CD4-positive, alpha-beta memory T cell (primary cell): ENCODE measurements at regions of chr20 and their contacts with region 1.

Region 1: GRCh38 chr20:53611449-53611894 is 17.8 kb upstream of the ZNF217 start:
- DNase-seq: no peak
- H3K4me3 ChIP-seq: no peak overlapping the region
- H3K4me3 Mint-ChIP-seq: no peak overlapping the region
- H3K27ac ChIP-seq: no peak overlapping the region
- H3K27ac Mint-ChIP-seq: peak overlapping the region in 2 of 7 donors; percentile 13 to 73
- H3K4me1 ChIP-seq: peaks cover 33% of the 10 kb centered on the region
- H3K4me1 Mint-ChIP-seq: peaks cover 13 to 28% (median 22%) of the 10 kb centered on the region in 4 donors
- H3K27me3 ChIP-seq: no peaks in the 10 kb centered on the region
- H3K27me3 Mint-ChIP-seq: no peaks in the 10 kb centered on the region

Region 2: GRCh38 chr20:53399592-53400259 is 211.7 kb before region 1 on chr20:
- CTCF ChIA-PET with region 1: no interaction called
- POLR2A ChIA-PET with region 1: no interaction called
- intact Hi-C with region 1: no loop called
- DNase-seq: no peak
- H3K4me3 ChIP-seq: no peak overlapping the region
- H3K4me3 Mint-ChIP-seq: no peak overlapping the region
- H3K27ac ChIP-seq: no peak overlapping the region
- H3K27ac Mint-ChIP-seq: no peak overlapping the region
- H3K4me1 ChIP-seq: peaks cover 8% of the 10 kb centered on the region
- H3K4me1 Mint-ChIP-seq: peaks cover 7 to 13% (median 12%) of the 10 kb centered on the region in 4 donors
- H3K27me3 ChIP-seq: no peaks in the 10 kb centered on the region
- H3K27me3 Mint-ChIP-seq: peaks cover 2 to 7% of the 10 kb centered on the region in 2 donors

Region 3: GRCh38 chr20:53586640-53587039 is 24.8 kb before region 1 on chr20:
- CTCF ChIA-PET with region 1: interaction called, 12 read pairs
- POLR2A ChIA-PET with region 1: interaction called, 198 read pairs
- intact Hi-C with region 1: no loop called
- DNase-seq: no peak
- H3K4me3 ChIP-seq: peak overlapping the region in 1 of 2 donors; percentile 6
- H3K4me3 Mint-ChIP-seq: peak overlapping the region; percentile 78 to 93 (median 86)
- H3K27ac ChIP-seq: peak overlapping the region; percentile 68
- H3K27ac Mint-ChIP-seq: peak overlapping the region; percentile 93 to 100 (median 97)
- H3K4me1 ChIP-seq: peaks cover 79% of the 10 kb centered on the region
- H3K4me1 Mint-ChIP-seq: peaks cover 43 to 91% (median 64%) of the 10 kb centered on the region in 4 donors
- H3K27me3 ChIP-seq: no peaks in the 10 kb centered on the region
- H3K27me3 Mint-ChIP-seq: no peaks in the 10 kb centered on the region

Region 4: GRCh38 chr20:53623454-53624211 is 12.2 kb after region 1 on chr20:
- CTCF ChIA-PET with region 1: interaction called, 39 read pairs
- POLR2A ChIA-PET with region 1: interaction called, 136 read pairs
- intact Hi-C with region 1: loop called (anchors 1 kb)
- DNase-seq: peak; percentile 29 to 47 (median 31)
- H3K4me3 ChIP-seq: peak overlapping the region; percentile 43 to 67
- H3K4me3 Mint-ChIP-seq: peak overlapping the region; percentile 82 to 90 (median 88)
- H3K27ac ChIP-seq: peak overlapping the region; percentile 58
- H3K27ac Mint-ChIP-seq: peak overlapping the region; percentile 88 to 97 (median 95)
- H3K4me1 ChIP-seq: peaks cover 37% of the 10 kb centered on the region
- H3K4me1 Mint-ChIP-seq: peaks cover 29 to 38% (median 35%) of the 10 kb centered on the region in 4 donors
- H3K27me3 ChIP-seq: no peaks in the 10 kb centered on the region
- H3K27me3 Mint-ChIP-seq: no peaks in the 10 kb centered on the region

Region 5: DNA sequence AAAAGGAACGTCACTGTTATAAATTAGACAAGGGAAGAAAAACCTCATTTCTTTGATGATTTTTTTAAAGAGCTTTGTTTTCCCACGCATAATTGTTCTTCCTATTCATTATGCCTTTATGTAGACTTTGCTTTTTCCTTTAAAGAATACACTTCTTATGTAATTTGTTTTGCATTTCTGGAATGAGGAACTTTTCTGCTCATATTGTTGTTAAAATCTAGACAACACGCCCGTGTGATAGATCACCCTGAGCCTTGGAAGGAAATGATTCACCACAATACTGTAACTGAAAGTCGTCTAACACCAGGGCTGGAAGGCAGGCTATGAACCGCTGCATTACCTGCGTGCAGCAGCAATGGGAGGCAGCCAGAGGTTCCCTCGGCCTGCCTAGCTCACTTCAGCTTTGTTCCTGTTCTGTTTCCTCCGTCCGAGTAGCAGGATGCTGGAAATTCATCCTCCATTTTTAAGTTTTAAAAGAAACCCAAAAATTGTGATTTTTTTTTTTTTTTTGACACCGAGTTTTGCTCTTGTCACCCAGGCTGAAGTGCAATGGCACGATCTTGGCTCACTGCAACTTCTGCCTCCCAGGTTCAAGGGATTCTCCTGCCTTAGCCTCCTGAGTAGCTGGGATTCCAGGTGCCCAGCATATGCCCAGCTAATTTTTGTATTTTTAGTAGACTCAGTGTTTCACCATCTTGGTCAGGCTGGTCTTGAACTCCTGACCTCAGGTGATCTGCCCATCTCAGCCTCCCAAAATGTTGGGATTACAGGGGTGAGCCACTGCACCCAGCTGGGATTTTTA is 31.8 kb after region 1 on chr20:
- CTCF ChIA-PET with region 1: interaction called, 17 read pairs
- POLR2A ChIA-PET with region 1: interaction called, 96 read pairs
- intact Hi-C with region 1: loop called (anchors 1 kb)
- DNase-seq: peak; percentile 67 to 84 (median 73)
- H3K4me3 ChIP-seq: peak overlapping the region; percentile 19 to 26
- H3K4me3 Mint-ChIP-seq: peak overlapping the region; percentile 75 to 93 (median 86)
- H3K27ac ChIP-seq: peak overlapping the region; percentile 59
- H3K27ac Mint-ChIP-seq: peak overlapping the region; percentile 94 to 99 (median 98)
- H3K4me1 ChIP-seq: peaks cover 37% of the 10 kb centered on the region
- H3K4me1 Mint-ChIP-seq: peaks cover 14 to 52% (median 37%) of the 10 kb centered on the region in 4 donors
- H3K27me3 ChIP-seq: no peaks in the 10 kb centered on the region
- H3K27me3 Mint-ChIP-seq: no peaks in the 10 kb centered on the region

Region 6: GRCh38 chr20:53652090-53652858 is 40.8 kb after region 1 on chr20:
- CTCF ChIA-PET with region 1: interaction called, 4 read pairs
- POLR2A ChIA-PET with region 1: interaction called, 20 read pairs
- intact Hi-C with region 1: no loop called
- DNase-seq: peak; percentile 21 to 44 (median 32)
- H3K4me3 ChIP-seq: peak overlapping the region; percentile 4 to 11
- H3K4me3 Mint-ChIP-seq: peak overlapping the region; percentile 49 to 82 (median 74)
- H3K27ac ChIP-seq: peak overlapping the region; percentile 55
- H3K27ac Mint-ChIP-seq: peak overlapping the region; percentile 80 to 97 (median 94)
- H3K4me1 ChIP-seq: peaks cover 43% of the 10 kb centered on the region
- H3K4me1 Mint-ChIP-seq: peaks cover 27 to 41% (median 35%) of the 10 kb centered on the region in 4 donors
- H3K27me3 ChIP-seq: no peaks in the 10 kb centered on the region
- H3K27me3 Mint-ChIP-seq: no peaks in the 10 kb centered on the region

Region 7: GRCh38 chr20:53660078-53660909 is 48.8 kb after region 1 on chr20:
- CTCF ChIA-PET with region 1: interaction called, 10 read pairs
- POLR2A ChIA-PET with region 1: interaction called, 22 read pairs
- intact Hi-C with region 1: no loop called
- DNase-seq: peak in 2 of 5 donors; percentile 16 to 18
- H3K4me3 ChIP-seq: peak overlapping the region; percentile 56 to 66
- H3K4me3 Mint-ChIP-seq: peak overlapping the region; percentile 77 to 91 (median 88)
- H3K27ac ChIP-seq: peak overlapping the region; percentile 41
- H3K27ac Mint-ChIP-seq: peak overlapping the region; percentile 63 to 93 (median 89)
- H3K4me1 ChIP-seq: peaks cover 46% of the 10 kb centered on the region
- H3K4me1 Mint-ChIP-seq: peaks cover 36 to 70% (median 50%) of the 10 kb centered on the region in 4 donors
- H3K27me3 ChIP-seq: no peaks in the 10 kb centered on the region
- H3K27me3 Mint-ChIP-seq: no peaks in the 10 kb centered on the region